Testis (tissue), 5 donors: ENCODE measurements at regions of chr11 and their contacts with region 1.

Region 1: DNA sequence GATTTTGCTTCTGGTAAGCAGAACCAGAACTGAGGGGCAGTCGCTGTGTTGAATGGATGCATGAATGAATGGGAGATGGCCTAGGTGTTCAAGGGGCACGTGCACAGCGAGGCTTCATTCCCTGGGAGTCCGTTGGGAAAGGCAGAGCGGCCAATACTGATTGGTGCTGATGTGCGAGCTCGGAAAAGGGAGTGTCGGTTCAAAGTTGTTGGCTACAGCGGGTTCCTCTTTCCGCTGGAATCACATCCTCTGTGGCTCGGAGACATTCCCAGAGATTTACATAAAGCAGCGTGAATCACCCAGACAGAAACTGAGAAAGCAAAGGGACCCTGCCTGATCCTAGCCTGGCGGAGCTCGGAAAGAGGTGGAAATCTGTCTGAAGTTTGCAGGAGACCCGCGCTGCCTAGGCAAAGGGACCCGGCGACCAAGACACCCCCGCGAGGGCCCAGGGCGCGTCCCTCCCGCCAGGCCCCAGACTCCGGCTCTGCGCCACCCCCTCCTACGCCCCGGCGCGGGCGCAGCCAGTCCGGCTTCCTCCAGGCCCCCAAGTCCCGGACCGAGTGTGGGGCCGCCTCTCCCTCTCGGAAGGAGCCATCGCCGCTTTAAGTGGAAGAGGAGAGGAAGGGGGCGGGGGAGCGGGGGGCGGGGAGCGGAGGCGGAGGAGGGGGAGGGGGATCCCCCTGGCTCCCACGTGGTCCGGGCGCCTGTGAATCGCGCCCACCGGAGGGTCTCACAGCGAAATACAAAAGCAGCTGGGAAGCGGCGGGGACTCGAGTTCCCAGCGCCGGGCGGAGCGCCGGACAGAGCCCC is at the start of gene FJX1:
- DNase-seq: peak; percentile 66
- H3K4me3 ChIP-seq: peak within 1 kb of the TSS; percentile 61 to 62
- H3K27ac ChIP-seq: peak within 1 kb of the TSS in 1 of 2 donors; percentile 79
- H3K4me1 ChIP-seq: peaks cover 6% of the 10 kb centered on the region
- H3K27me3 ChIP-seq: no peaks in the 10 kb centered on the region
- CTCF ChIP-seq: no peak
- POLR2A ChIP-seq: no peak
- total RNA-seq, gene FJX1: 2.8 to 5.1 TPM

Region 2: GRCh38 chr11:35771722-35772121 is 153.8 kb after region 1 on chr11:
- intact Hi-C with region 1: no loop called
- DNase-seq: no peak
- H3K4me3 ChIP-seq: no peak overlapping the region
- H3K27ac ChIP-seq: no peak overlapping the region
- H3K4me1 ChIP-seq: no peaks in the 10 kb centered on the region
- H3K27me3 ChIP-seq: no peaks in the 10 kb centered on the region
- CTCF ChIP-seq: no peak
- POLR2A ChIP-seq: no peak

Region 3: GRCh38 chr11:35822815-35823495 is 205.1 kb after region 1 on chr11:
- intact Hi-C with region 1: loop called (anchors 10 kb)
- DNase-seq: no peak
- H3K4me3 ChIP-seq: no peak overlapping the region
- H3K27ac ChIP-seq: no peak overlapping the region
- H3K4me1 ChIP-seq: peaks cover 19% of the 10 kb centered on the region
- H3K27me3 ChIP-seq: no peaks in the 10 kb centered on the region
- CTCF ChIP-seq: no peak
- POLR2A ChIP-seq: no peak

Region 4: DNA sequence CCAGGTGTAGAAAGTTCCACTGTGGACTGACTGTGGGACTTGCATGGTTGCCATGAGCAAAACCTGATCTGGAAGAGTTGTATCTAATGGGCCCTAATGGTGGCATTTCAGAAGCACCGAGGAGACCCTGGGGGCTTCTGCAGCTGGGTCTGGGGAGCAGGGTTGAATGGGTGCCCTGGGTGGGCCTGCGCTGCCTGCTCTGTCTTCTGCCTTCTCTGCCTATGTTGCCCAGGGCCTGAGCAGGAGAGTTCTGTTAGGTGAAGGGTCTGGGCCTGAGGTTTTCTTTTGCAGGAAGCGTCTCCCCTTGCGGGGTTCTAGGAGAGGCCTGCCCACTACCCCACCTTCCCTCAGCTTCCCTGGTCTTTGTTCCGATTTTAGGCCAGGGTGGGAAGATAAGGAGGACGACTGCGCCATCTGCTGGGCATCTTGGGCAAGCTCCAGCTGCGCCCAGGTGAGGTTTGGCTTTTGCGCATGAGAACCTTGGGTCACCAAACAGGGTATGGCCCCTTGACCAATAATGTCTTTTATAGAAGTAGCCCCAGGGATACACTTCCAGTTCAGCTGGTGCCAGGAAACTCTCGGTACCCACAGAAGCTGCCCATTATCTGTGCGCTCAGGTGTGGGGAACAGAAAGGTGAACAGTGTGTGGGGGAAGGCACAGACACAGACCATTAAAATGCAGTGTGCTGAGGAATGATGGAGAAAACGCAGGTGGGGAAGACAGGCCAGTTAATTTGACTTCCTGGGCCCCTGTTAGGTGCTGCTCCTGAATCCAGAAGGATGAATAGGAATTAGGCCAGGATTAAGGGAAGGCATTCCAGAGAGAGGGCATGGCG is 648.1 kb after region 1 on chr11:
- intact Hi-C with region 1: loop called (anchors 5 kb)
- DNase-seq: peak; percentile 50
- H3K4me3 ChIP-seq: no peak overlapping the region
- H3K27ac ChIP-seq: no peak overlapping the region
- H3K4me1 ChIP-seq: no peaks in the 10 kb centered on the region
- H3K27me3 ChIP-seq: no peaks in the 10 kb centered on the region
- CTCF ChIP-seq: peak; percentile 66 to 78 (median 74)
- POLR2A ChIP-seq: no peak